ENCODE measurements at regions of chr1 and their contacts with region 1.

Region 1: DNA sequence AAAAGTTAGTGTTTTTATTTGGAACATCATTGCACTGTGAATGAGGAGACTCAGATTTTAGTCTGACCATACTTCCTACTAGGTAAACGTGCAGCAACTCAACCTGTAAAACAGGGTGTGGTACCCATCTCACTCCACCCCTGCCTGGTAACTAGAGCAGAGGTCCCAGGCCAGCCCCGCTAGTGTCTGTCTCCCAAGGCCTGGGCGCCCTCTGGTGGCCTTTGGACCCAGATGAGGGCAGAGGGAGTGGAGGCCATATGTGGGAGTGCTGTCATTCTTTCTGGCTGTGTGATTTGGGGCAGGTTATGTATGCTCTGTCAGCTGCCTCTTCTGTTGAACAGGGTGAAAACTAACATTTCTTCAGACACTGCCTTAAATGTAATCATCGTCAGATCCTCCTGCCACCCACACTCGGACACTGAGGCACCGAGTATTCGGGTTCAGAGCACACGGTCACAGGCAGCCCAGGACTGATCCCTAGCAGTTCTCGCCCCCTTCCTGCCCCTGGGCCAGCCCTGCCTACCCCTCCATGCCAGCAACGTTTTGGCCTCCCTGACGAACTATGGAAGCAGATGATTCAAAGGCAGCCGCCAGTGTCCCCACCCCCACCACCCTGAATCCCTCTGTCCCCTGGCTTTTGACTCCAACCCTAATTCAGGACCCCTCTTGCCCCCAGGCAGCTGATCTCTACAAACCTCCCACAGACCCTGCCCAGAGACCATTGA is 76.0 kb downstream of the CD247 start:
- DNase-seq: peak; percentile 79 to 93
- ATAC-seq: peak; percentile 95 to 96
- H3K4me3 ChIP-seq: no peak overlapping the region
- H3K27ac ChIP-seq: peak overlapping the region in 1 of 2 experiments; percentile 14; a peak in 1 of 6 replicates
- H3K4me1 ChIP-seq: peaks cover 3% of the 10 kb centered on the region; the same call in 2 of the 3 replicates
- CTCF ChIP-seq: peak; percentile 91
- EP300 ChIP-seq: no peak
- POLR2A ChIP-seq: no peak
- RAD21 ChIP-seq: peak; percentile 92

Region 2: GRCh38 chr1:167059045-167059808 is 383.1 kb before region 1 on chr1:
- CTCF ChIA-PET with region 1: interaction called, 20 read pairs
- POLR2A ChIA-PET with region 1: no interaction called
- DNase-seq: peak; percentile 52 to 67
- ATAC-seq: peak in 1 of 2 experiments; percentile 73; a peak in 3 of 6 replicates
- H3K4me3 ChIP-seq: no peak overlapping the region
- H3K27ac ChIP-seq: peak overlapping the region; percentile 51 to 86
- H3K4me1 ChIP-seq: no peaks in the 10 kb centered on the region
- CTCF ChIP-seq: peak; percentile 92
- EP300 ChIP-seq: no peak
- POLR2A ChIP-seq: no peak
- RAD21 ChIP-seq: peak; percentile 78 to 81

Region 3: GRCh38 chr1:167263819-167264464 is 178.3 kb before region 1 on chr1:
- CTCF ChIA-PET with region 1: interaction called, 72 read pairs
- POLR2A ChIA-PET with region 1: no interaction called
- DNase-seq: peak in 1 of 2 experiments; percentile 9
- ATAC-seq: peak; percentile 45; a peak in 3 of 6 replicates
- H3K4me3 ChIP-seq: no peak overlapping the region
- H3K27ac ChIP-seq: no peak overlapping the region
- H3K4me1 ChIP-seq: peaks cover 17% of the 10 kb centered on the region; the same call in 1 of the 3 replicates
- CTCF ChIP-seq: no peak
- EP300 ChIP-seq: no peak
- POLR2A ChIP-seq: no peak
- RAD21 ChIP-seq: no peak

Region 4: DNA sequence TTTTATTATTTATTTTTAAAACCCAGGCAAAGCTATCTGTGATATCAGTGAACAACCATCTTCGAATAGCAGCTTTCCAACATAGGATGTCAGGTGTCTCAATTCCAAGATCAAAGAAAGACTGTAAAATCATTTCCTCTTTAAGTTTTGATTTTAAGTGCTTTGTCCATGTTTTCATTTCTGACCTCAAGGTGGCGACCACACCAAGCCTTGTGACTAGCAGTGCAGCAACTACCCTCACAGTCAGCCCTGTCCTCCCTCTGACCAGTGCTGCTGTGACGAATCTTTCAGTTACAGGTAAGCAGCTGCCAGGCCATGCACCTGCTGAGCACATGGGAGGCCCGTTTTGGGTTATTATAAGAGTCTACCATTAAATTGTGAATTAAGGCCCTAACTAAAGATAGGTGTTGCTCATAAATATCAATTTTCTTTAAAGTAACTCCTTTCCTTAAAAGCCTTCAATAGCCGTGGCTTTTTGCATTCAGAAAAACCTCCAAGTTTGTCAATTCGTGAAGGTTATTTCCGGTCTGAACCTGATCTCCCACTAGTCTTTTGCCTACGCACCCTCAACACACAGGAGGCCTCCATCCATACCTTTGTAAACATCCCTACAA is 40.9 kb before region 1 on chr1:
- CTCF ChIA-PET with region 1: interaction called, 24 read pairs
- POLR2A ChIA-PET with region 1: no interaction called
- DNase-seq: peak; percentile 51 to 74
- ATAC-seq: peak; percentile 96 to 98
- H3K4me3 ChIP-seq: no peak overlapping the region
- H3K27ac ChIP-seq: no peak overlapping the region
- H3K4me1 ChIP-seq: peaks cover 6% of the 10 kb centered on the region; the same call in 1 of the 3 replicates
- CTCF ChIP-seq: peak; percentile 81
- EP300 ChIP-seq: no peak
- POLR2A ChIP-seq: no peak
- RAD21 ChIP-seq: peak; percentile 67 to 75

Region 5: GRCh38 chr1:167430134-167430856 is 12.0 kb before region 1 on chr1:
- CTCF ChIA-PET with region 1: interaction called, 46 read pairs
- POLR2A ChIA-PET with region 1: no interaction called
- DNase-seq: no peak
- ATAC-seq: no peak; a peak in 1 of 6 replicates
- H3K4me3 ChIP-seq: no peak overlapping the region
- H3K27ac ChIP-seq: no peak overlapping the region
- H3K4me1 ChIP-seq: no peaks in the 10 kb centered on the region
- CTCF ChIP-seq: no peak
- EP300 ChIP-seq: no peak
- POLR2A ChIP-seq: no peak
- RAD21 ChIP-seq: no peak

Region 6: GRCh38 chr1:167599957-167600581 is 157.8 kb after region 1 on chr1:
- CTCF ChIA-PET with region 1: no interaction called
- POLR2A ChIA-PET with region 1: no interaction called
- DNase-seq: peak in 1 of 2 experiments; percentile 42
- ATAC-seq: peak; percentile 86 to 87
- H3K4me3 ChIP-seq: no peak overlapping the region
- H3K27ac ChIP-seq: 0 out of 6 replicates have a peak overlapping the region, but pooled peaks of 1 of the 2 experiments have one; percentile 0
- H3K4me1 ChIP-seq: peaks cover 15% of the 10 kb centered on the region; the same call in 2 of the 3 replicates
- CTCF ChIP-seq: peak; percentile 71
- EP300 ChIP-seq: no peak
- POLR2A ChIP-seq: no peak
- RAD21 ChIP-seq: peak; percentile 81 to 82